ENCODE measurements at regions of chr5 and their contacts with region 1.

Region 1: DNA sequence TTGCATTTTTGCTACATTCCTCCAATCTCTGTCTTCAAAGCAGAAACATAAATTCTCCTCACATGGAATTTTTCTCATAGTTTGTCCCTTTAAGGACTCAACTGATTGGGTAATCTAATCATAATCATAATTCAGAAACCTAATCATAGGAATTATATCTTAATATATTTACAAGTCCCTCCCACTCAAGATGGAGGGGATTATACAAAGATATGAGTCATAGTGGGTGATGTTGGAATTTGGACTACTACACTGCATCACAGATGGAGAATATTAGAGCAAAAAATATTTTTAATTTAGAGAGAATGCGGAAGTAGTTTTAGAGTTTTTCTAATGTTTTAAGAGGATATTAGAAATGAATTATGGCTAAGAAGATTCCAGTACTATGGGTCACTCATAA is 1034.0 kb downstream of the DTWD2 start:
- DNase-seq: no peak
- H3K4me3 ChIP-seq: no peak overlapping the region
- H3K27ac ChIP-seq: no peak overlapping the region
- H3K4me1 ChIP-seq: no peaks in the 10 kb centered on the region
- H3K27me3 ChIP-seq: no peaks in the 10 kb centered on the region
- CTCF ChIP-seq: no peak
- EP300 ChIP-seq: no peak
- POLR2A ChIP-seq: no peak

Region 2: GRCh38 chr5:117982691-117983090 is 28.4 kb after region 1 on chr5:
- in situ Hi-C with region 1: no loop called
- intact Hi-C with region 1: loop called (anchors 1 kb)
- DNase-seq: no peak
- H3K4me3 ChIP-seq: no peak overlapping the region
- H3K27ac ChIP-seq: no peak overlapping the region
- H3K4me1 ChIP-seq: no peaks in the 10 kb centered on the region
- H3K27me3 ChIP-seq: no peaks in the 10 kb centered on the region
- CTCF ChIP-seq: no peak
- EP300 ChIP-seq: no peak
- POLR2A ChIP-seq: no peak

Region 3: GRCh38 chr5:118006219-118006618 is 51.9 kb after region 1 on chr5:
- in situ Hi-C with region 1: no loop called
- intact Hi-C with region 1: no loop called
- DNase-seq: no peak
- H3K4me3 ChIP-seq: no peak overlapping the region
- H3K27ac ChIP-seq: no peak overlapping the region
- H3K4me1 ChIP-seq: peaks cover 0 to 4% (median 0%) of the 10 kb centered on the region in 4 donors
- H3K27me3 ChIP-seq: no peaks in the 10 kb centered on the region
- CTCF ChIP-seq: no peak
- EP300 ChIP-seq: no peak
- POLR2A ChIP-seq: no peak